ENCODE measurements at regions of chr5 and their contacts with region 1.

Region 1: GRCh38 chr5:96601811-96602244 is 60.3 kb upstream of the CAST start:
- DNase-seq: no peak
- ATAC-seq: peak; percentile 75
- H3K4me3 Mint-ChIP-seq: no peak overlapping the region
- H3K27ac Mint-ChIP-seq: no peak overlapping the region
- H3K4me1 Mint-ChIP-seq: no peaks in the 10 kb centered on the region
- H3K27me3 Mint-ChIP-seq: no peaks in the 10 kb centered on the region
- CTCF ChIP-seq: peak; percentile 45

Region 2: GRCh38 chr5:96344678-96345577 is 256.9 kb before region 1 on chr5:
- CTCF ChIA-PET with region 1: interaction called, 4 read pairs
- POLR2A ChIA-PET with region 1: no interaction called
- intact Hi-C with region 1: loop called (anchors 1 kb)
- DNase-seq: no peak
- ATAC-seq: no peak
- H3K4me3 Mint-ChIP-seq: no peak overlapping the region
- H3K27ac Mint-ChIP-seq: no peak overlapping the region
- H3K4me1 Mint-ChIP-seq: no peaks in the 10 kb centered on the region
- H3K27me3 Mint-ChIP-seq: peaks cover 14% of the 10 kb centered on the region
- CTCF ChIP-seq: no peak

Region 3: GRCh38 chr5:96439477-96440184 is 162.2 kb before region 1 on chr5:
- CTCF ChIA-PET with region 1: no interaction called
- POLR2A ChIA-PET with region 1: no interaction called
- intact Hi-C with region 1: loop called (anchors 5 kb)
- DNase-seq: no peak
- ATAC-seq: peak; percentile 71
- H3K4me3 Mint-ChIP-seq: peak overlapping the region; percentile 56
- H3K27ac Mint-ChIP-seq: peak overlapping the region; percentile 77
- H3K4me1 Mint-ChIP-seq: peaks cover 17% of the 10 kb centered on the region
- H3K27me3 Mint-ChIP-seq: peaks cover 11% of the 10 kb centered on the region
- CTCF ChIP-seq: no peak

Region 4: GRCh38 chr5:96590797-96591196 is 11.0 kb before region 1 on chr5:
- CTCF ChIA-PET with region 1: interaction called, 12 read pairs
- POLR2A ChIA-PET with region 1: no interaction called
- intact Hi-C with region 1: no loop called
- DNase-seq: no peak
- ATAC-seq: no peak
- H3K4me3 Mint-ChIP-seq: no peak overlapping the region
- H3K27ac Mint-ChIP-seq: no peak overlapping the region
- H3K4me1 Mint-ChIP-seq: no peaks in the 10 kb centered on the region
- H3K27me3 Mint-ChIP-seq: peaks cover 12% of the 10 kb centered on the region
- CTCF ChIP-seq: no peak

Measured in activated B cell treated with CpG ODN at 0.5 μM for 24 hours (primary cell).